ENCODE measurements at regions of chr5 and their contacts with region 1.

Region 1: GRCh38 chr5:40799258-40799657 is 1.1 kb upstream of the PRKAA1 start:
- DNase-seq: no peak
- H3K4me3 ChIP-seq: peak overlapping the region in 3 of 4 experiments; percentile 65 to 96 (median 93); a peak in 5 of 8 replicates
- H3K27ac ChIP-seq: no peak overlapping the region
- H3K4me1 ChIP-seq: peaks cover 0 to 5% (median 0%) of the 10 kb centered on the region in 4 experiments; a peak in 2 of 7 replicates
- H3K27me3 ChIP-seq: no peaks in the 10 kb centered on the region
- CTCF ChIP-seq: no peak
- EP300 ChIP-seq: no peak
- POLR2A ChIP-seq: no peak
- RAD21 ChIP-seq: no peak

Region 2: GRCh38 chr5:40660751-40661150 is 138.5 kb before region 1 on chr5:
- CTCF ChIA-PET with region 1: no interaction called
- POLR2A ChIA-PET with region 1: no interaction called
- DNase-seq: no peak
- H3K4me3 ChIP-seq: no peak overlapping the region
- H3K27ac ChIP-seq: no peak overlapping the region
- H3K4me1 ChIP-seq: no peaks in the 10 kb centered on the region
- H3K27me3 ChIP-seq: no peaks in the 10 kb centered on the region
- CTCF ChIP-seq: no peak
- EP300 ChIP-seq: no peak
- POLR2A ChIP-seq: no peak
- RAD21 ChIP-seq: no peak

Region 3: DNA sequence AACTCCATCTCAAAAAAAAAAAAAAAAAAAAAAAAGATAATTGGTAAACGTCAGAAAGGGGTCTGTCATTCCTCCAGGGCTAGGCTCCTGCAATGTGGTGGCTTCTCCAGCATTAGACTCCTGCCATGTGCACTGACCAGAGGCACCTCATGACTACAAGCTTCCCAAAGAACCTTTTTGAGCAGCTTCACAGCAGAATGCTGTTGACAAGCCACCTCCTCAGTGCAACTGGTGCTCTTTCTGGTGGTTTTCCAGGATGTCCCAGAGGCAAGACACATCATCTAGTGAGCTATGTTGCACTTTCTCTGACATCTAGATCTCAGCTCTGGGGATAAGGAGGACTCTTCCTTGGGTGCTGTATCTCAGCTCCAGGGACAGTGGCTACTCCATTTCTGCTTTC is 24.2 kb after region 1 on chr5:
- CTCF ChIA-PET with region 1: interaction called, 4 read pairs
- POLR2A ChIA-PET with region 1: interaction called, 86 read pairs
- DNase-seq: no peak
- H3K4me3 ChIP-seq: no peak overlapping the region
- H3K27ac ChIP-seq: no peak overlapping the region
- H3K4me1 ChIP-seq: no peaks in the 10 kb centered on the region
- H3K27me3 ChIP-seq: no peaks in the 10 kb centered on the region
- CTCF ChIP-seq: no peak
- EP300 ChIP-seq: no peak
- POLR2A ChIP-seq: no peak
- RAD21 ChIP-seq: no peak